Activated naive CD4-positive, alpha-beta T cell treated with anti-CD3 and anti-CD28 coated beads for 36 hours (primary cell): ENCODE measurements at regions of chr5 and their contacts with region 1.

Region 1: DNA sequence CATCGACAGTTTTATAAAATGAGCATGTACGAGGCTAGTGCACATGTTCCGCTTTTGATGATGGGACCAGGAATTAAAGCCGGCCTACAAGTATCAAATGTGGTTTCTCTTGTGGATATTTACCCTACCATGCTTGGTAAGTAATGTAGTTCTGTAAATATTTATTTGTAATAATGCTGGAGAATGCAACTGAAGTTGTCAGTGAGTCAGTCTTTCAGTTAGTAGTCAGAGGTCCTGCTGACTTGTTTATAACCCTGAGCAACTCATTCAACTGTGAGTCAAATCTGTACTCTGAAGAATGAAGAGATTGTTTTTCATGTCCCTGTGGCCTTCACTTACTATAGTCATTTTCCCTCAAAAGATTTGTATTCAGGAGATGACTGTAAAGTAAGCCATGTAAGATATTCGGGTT is 28.4 kb upstream of the GPR150 start:
- DNase-seq: no peak
- H3K4me3 Mint-ChIP-seq: no peak overlapping the region
- H3K27ac Mint-ChIP-seq: no peak overlapping the region
- H3K4me1 Mint-ChIP-seq: peaks cover 25% of the 10 kb centered on the region
- H3K27me3 Mint-ChIP-seq: no peaks in the 10 kb centered on the region

Region 2: DNA sequence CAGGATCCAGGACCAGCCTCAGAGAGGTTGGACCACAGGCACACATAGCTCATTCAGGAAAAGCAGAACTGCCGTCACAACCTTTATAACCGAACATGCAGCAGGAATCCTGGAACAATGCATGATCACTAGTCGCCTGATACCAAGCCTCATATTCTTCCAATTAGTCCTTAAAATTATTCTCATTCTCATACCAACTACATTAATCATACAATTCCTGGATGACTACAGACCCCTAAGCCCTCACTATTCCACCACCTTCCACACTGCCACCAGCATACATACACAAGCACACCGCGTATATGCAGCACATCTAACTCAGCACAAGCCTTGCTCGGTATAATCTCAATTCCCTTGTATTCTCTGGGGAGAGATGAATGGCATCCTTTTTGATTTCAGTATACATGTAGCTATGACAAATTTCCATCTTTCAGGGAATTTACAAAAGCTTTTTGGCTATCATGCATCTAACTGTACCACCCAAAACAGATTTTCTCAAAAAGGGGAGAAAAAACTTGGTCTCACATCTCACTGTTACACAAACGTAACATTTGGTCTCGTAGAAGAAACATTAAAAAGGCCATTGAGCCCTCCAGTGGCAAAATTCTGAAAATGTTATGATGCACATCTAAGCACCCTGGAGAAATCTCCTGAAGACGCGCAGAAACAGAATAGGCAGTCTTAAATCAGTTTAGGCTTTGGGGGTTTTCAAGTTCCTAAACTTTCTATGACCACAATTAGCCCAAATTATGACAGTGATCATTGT is 352.8 kb before region 1 on chr5:
- CTCF ChIA-PET with region 1: no interaction called
- intact Hi-C with region 1: loop called (anchors 1 kb)
- DNase-seq: no peak
- H3K4me3 Mint-ChIP-seq: no peak overlapping the region
- H3K27ac Mint-ChIP-seq: no peak overlapping the region
- H3K4me1 Mint-ChIP-seq: no peaks in the 10 kb centered on the region
- H3K27me3 Mint-ChIP-seq: peaks cover 8% of the 10 kb centered on the region

Region 3: GRCh38 chr5:95620030-95620869 is 28.8 kb after region 1 on chr5 and contains the start of gene GPR150:
- CTCF ChIA-PET with region 1: no interaction called
- intact Hi-C with region 1: loop called (anchors 1 kb)
- DNase-seq: peak; percentile 69
- H3K4me3 Mint-ChIP-seq: peak within 1 kb of the TSS; percentile 82
- H3K27ac Mint-ChIP-seq: peak within 1 kb of the TSS; percentile 17
- H3K4me1 Mint-ChIP-seq: peaks cover 36% of the 10 kb centered on the region
- H3K27me3 Mint-ChIP-seq: no peaks in the 10 kb centered on the region
- total RNA-seq, gene GPR150: 0.64 to 0.94 TPM

Region 4: GRCh38 chr5:95631991-95632675 is 40.6 kb after region 1 on chr5:
- CTCF ChIA-PET with region 1: no interaction called
- intact Hi-C with region 1: loop called (anchors 1 kb)
- DNase-seq: peak; percentile 89
- H3K4me3 Mint-ChIP-seq: peak overlapping the region; percentile 53
- H3K27ac Mint-ChIP-seq: peak overlapping the region; percentile 94
- H3K4me1 Mint-ChIP-seq: peaks cover 20% of the 10 kb centered on the region
- H3K27me3 Mint-ChIP-seq: no peaks in the 10 kb centered on the region

Region 5: GRCh38 chr5:95655575-95655974 is 64.1 kb after region 1 on chr5:
- CTCF ChIA-PET with region 1: no interaction called
- intact Hi-C with region 1: no loop called
- DNase-seq: no peak
- H3K4me3 Mint-ChIP-seq: no peak overlapping the region
- H3K27ac Mint-ChIP-seq: no peak overlapping the region
- H3K4me1 Mint-ChIP-seq: no peaks in the 10 kb centered on the region
- H3K27me3 Mint-ChIP-seq: no peaks in the 10 kb centered on the region

Region 6: GRCh38 chr5:95718203-95718602 is 126.7 kb after region 1 on chr5:
- CTCF ChIA-PET with region 1: no interaction called
- intact Hi-C with region 1: loop called (anchors 1 kb)
- DNase-seq: peak; percentile 60
- H3K4me3 Mint-ChIP-seq: no peak overlapping the region
- H3K27ac Mint-ChIP-seq: no peak overlapping the region
- H3K4me1 Mint-ChIP-seq: peaks cover 22% of the 10 kb centered on the region
- H3K27me3 Mint-ChIP-seq: peaks cover 11% of the 10 kb centered on the region

Region 7: GRCh38 chr5:95835682-95836385 is 244.3 kb after region 1 on chr5:
- CTCF ChIA-PET with region 1: no interaction called
- intact Hi-C with region 1: loop called (anchors 1 kb)
- DNase-seq: peak; percentile 57
- H3K4me3 Mint-ChIP-seq: peak overlapping the region; percentile 77
- H3K27ac Mint-ChIP-seq: peak overlapping the region; percentile 92
- H3K4me1 Mint-ChIP-seq: peaks cover 47% of the 10 kb centered on the region
- H3K27me3 Mint-ChIP-seq: no peaks in the 10 kb centered on the region